Activated CD8-positive, alpha-beta memory T cell treated with anti-CD3 and anti-CD28 coated beads, Interleukin-2, amount 10 ng/mL, durations not matched to agents 7 days and 5 days (primary cell): ENCODE measurements at regions of chr10 and their contacts with region 1.

Region 1: DNA sequence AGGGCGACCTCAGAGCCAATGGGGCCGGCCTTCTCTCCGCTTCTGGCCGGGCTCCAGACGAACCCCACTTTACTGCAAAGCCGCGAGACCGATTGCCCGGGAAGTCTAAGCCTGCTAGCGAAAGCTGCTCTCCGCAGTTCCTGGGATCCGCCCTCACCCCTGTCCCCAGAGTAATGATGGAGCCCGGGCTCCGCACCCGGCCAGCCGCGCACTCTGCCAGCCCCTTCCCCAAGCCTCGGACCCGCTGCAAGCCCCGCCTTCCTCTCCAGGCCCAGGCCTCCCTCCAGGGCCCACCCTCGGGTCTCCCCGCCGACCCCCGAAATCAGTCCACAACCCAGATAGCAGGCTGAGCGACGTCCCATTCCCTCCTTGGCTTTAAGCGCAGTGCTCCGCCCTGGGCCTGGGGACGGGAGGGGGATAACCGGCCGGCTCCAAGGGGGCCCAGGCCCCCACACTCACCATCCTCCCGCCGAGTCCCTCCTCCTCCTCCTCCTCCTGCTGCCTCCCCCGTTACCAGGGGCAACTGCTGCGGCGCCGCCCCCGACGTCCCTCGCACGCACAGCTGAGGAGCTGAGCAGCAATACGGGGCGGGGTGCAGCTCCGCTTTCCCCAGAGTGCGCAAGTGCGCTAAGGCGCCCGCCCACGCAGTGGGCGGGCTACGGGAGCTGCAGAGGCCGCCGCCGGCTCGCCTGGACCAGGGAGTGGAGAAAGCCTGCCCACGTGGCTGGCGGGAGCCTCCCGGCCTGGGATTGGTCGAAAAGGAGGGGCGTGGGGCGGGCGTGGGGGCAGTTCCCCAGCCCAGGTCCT is at the start of gene ARL3:
- DNase-seq: peak; percentile 99
- ATAC-seq: peak; percentile 92
- H3K4me3 Mint-ChIP-seq: peak within 1 kb of the TSS; percentile 80
- H3K27ac Mint-ChIP-seq: peak within 1 kb of the TSS; percentile 87
- H3K4me1 Mint-ChIP-seq: peaks cover 64% of the 10 kb centered on the region
- H3K27me3 Mint-ChIP-seq: no peaks in the 10 kb centered on the region
- total RNA-seq, gene ARL3: 7.2 to 9.7 TPM

Region 2: GRCh38 chr10:102596506-102596971 is 117.5 kb before region 1 on chr10:
- CTCF ChIA-PET with region 1: no interaction called
- DNase-seq: peak; percentile 57
- ATAC-seq: peak; percentile 49
- H3K4me3 Mint-ChIP-seq: no peak overlapping the region
- H3K27ac Mint-ChIP-seq: no peak overlapping the region
- H3K4me1 Mint-ChIP-seq: no peaks in the 10 kb centered on the region
- H3K27me3 Mint-ChIP-seq: no peaks in the 10 kb centered on the region

Region 3: DNA sequence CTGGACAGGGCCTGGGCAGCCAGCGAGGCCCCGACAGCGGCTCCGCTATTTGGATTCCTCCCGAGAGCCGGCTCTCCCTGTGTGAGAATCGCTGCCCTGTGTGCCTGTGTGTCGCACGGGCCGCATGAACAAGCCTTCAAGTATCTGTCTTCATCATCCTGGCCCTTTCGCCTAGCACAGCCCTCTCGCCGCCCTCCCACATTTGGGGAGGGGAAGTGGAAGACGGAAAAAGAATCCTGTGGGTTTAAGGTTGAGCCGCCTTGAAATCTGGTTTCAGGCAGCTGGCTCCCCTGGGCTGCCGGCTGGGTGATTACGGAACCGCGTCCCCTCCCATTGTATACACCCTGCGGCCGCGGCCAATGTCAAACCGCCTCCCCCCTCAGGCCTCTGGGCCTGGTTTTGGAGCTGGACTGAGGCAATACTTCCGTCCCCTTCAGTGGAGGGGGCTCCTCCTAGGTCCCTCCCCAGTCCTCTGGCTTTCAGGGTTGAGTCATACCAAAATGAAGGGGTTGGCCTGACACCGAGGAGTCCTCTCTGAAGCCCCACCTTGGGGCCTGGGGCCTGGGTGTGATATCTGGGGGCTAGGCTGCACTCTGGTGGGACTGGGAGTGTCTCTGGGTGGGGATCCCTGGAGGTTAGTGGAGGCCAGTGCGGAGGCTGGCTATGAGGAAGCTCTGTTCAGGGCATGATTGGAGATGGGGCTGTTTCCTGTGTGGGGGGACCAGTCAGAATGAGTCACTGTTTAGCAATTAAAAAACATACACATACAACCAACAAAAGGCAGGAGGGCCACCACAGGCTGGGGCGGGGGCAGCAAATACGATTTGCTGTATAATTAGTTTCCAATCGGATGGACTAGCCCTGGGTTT is 68.0 kb before region 1 on chr10:
- CTCF ChIA-PET with region 1: interaction called, 52 read pairs
- DNase-seq: peak; percentile 93
- ATAC-seq: peak; percentile 50
- H3K4me3 Mint-ChIP-seq: peak overlapping the region; percentile 94
- H3K27ac Mint-ChIP-seq: peak overlapping the region; percentile 98
- H3K4me1 Mint-ChIP-seq: peaks cover 52% of the 10 kb centered on the region
- H3K27me3 Mint-ChIP-seq: no peaks in the 10 kb centered on the region

Region 4: DNA sequence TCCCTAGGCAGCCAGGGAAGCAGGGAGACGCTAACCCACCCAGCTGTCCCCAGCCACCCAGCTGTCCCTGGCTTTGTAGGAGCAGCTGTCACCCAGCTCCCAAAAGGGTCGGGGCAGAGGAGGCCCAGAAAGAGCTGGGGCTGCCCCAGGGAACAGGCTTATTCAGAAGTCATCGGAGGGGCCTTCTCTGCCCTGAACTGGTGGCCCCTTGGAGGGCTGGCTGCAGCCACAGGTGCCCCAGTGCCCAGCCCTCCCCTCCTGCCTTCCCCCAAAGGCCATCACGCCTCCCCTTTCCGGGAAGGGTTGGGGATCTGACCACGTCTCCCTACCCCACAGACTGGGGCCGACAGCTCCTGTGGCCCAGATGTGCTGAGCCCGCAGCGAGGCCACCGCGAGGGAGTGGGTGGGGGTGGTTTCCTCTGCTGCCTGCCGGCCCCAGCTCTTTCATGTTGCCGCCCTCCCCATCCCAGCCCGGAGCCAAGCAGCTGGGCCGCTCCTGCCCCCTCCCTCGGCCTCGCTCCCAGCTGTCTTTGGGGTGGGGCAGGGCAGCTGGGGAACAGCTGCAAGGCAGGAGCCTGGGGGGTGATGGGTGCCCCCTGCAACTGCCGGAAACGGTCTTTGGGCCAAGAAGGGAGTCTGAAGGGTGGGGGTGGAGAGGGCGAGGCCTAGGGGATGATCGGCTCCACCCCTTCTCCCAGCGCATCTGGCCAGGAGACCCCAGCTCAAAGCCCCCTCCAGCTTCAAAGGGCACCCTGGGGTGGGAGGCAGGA is 52.9 kb before region 1 on chr10:
- CTCF ChIA-PET with region 1: interaction called, 12 read pairs
- DNase-seq: peak; percentile 88
- ATAC-seq: peak; percentile 88
- H3K4me3 Mint-ChIP-seq: peak overlapping the region; percentile 42
- H3K27ac Mint-ChIP-seq: peak overlapping the region; percentile 87
- H3K4me1 Mint-ChIP-seq: peaks cover 57% of the 10 kb centered on the region
- H3K27me3 Mint-ChIP-seq: no peaks in the 10 kb centered on the region

Region 5: GRCh38 chr10:102669206-102670064 is 44.6 kb before region 1 on chr10:
- CTCF ChIA-PET with region 1: interaction called, 12 read pairs
- DNase-seq: no peak
- ATAC-seq: no peak
- H3K4me3 Mint-ChIP-seq: no peak overlapping the region
- H3K27ac Mint-ChIP-seq: peak overlapping the region; percentile 43
- H3K4me1 Mint-ChIP-seq: peaks cover 13% of the 10 kb centered on the region
- H3K27me3 Mint-ChIP-seq: no peaks in the 10 kb centered on the region

Region 6: DNA sequence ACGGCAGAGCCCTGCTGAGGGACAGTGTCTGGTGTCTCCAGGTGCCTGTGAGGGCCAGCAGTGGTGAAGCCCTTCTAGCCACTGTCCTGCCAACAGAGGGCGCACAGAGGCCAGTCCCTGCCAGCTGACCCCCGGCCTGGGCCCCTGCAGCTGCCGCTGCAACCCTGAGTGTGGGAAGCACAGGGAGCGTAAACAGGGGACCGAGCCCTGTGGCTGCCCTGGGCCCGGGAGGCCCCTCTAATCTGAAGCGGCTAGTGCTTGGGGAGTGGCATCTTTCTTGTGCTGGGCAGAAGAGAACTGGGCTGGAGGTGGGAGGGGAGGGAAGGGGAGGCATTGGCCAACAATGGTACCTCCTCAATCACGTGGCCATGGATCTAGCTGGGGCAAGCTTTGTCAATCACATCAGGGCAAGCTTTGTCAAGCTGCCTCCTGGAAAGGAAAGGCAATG is 35.2 kb before region 1 on chr10:
- CTCF ChIA-PET with region 1: interaction called, 11 read pairs
- DNase-seq: no peak
- ATAC-seq: no peak
- H3K4me3 Mint-ChIP-seq: no peak overlapping the region
- H3K27ac Mint-ChIP-seq: no peak overlapping the region
- H3K4me1 Mint-ChIP-seq: peaks cover 42% of the 10 kb centered on the region
- H3K27me3 Mint-ChIP-seq: no peaks in the 10 kb centered on the region

Region 7: DNA sequence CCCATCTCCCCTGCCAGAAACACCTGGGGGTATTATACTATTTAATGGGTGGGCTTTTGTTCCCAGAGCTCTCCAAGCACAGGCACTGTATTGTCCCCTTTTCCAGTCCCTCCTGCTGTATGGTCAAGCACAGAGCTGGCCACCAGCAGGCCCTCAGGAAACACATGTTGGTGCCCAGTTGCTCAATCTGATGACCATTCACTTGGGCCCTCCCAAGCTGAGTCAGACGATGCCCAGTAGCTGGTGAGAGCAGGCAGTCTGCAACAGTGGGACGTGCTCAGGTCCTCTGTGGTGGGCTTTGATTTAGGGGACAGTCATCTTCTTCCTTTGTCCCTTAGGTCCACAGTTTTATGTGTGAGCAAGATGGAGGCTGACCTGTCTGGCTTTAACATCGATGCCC is 12.3 kb after region 1 on chr10:
- CTCF ChIA-PET with region 1: interaction called, 21 read pairs
- DNase-seq: no peak
- ATAC-seq: no peak
- H3K4me3 Mint-ChIP-seq: no peak overlapping the region
- H3K27ac Mint-ChIP-seq: no peak overlapping the region
- H3K4me1 Mint-ChIP-seq: peaks cover 26% of the 10 kb centered on the region
- H3K27me3 Mint-ChIP-seq: no peaks in the 10 kb centered on the region

Region 8: GRCh38 chr10:102743588-102744373 is 29.8 kb after region 1 on chr10 and contains the start of gene WBP1L:
- CTCF ChIA-PET with region 1: interaction called, 17 read pairs
- DNase-seq: peak; percentile 97
- ATAC-seq: peak; percentile 97
- H3K4me3 Mint-ChIP-seq: peak within 1 kb of the TSS; percentile 96
- H3K27ac Mint-ChIP-seq: peak within 1 kb of the TSS; percentile 90
- H3K4me1 Mint-ChIP-seq: peaks cover 44% of the 10 kb centered on the region
- H3K27me3 Mint-ChIP-seq: no peaks in the 10 kb centered on the region
- total RNA-seq, gene WBP1L: 23.9 to 24.6 TPM